ENCODE measurements at regions of chr12 and their contacts with region 1.

Region 1: GRCh38 chr12:109421355-109422087 is 55.6 kb downstream of the KCTD10 start:
- DNase-seq: no peak
- ATAC-seq: no peak
- H3K4me3 ChIP-seq: no peak overlapping the region
- H3K27ac ChIP-seq: no peak overlapping the region
- H3K4me1 ChIP-seq: no peaks in the 10 kb centered on the region
- CTCF ChIP-seq: no peak
- EP300 ChIP-seq: no peak
- POLR2A ChIP-seq: no peak
- RAD21 ChIP-seq: no peak

Region 2: DNA sequence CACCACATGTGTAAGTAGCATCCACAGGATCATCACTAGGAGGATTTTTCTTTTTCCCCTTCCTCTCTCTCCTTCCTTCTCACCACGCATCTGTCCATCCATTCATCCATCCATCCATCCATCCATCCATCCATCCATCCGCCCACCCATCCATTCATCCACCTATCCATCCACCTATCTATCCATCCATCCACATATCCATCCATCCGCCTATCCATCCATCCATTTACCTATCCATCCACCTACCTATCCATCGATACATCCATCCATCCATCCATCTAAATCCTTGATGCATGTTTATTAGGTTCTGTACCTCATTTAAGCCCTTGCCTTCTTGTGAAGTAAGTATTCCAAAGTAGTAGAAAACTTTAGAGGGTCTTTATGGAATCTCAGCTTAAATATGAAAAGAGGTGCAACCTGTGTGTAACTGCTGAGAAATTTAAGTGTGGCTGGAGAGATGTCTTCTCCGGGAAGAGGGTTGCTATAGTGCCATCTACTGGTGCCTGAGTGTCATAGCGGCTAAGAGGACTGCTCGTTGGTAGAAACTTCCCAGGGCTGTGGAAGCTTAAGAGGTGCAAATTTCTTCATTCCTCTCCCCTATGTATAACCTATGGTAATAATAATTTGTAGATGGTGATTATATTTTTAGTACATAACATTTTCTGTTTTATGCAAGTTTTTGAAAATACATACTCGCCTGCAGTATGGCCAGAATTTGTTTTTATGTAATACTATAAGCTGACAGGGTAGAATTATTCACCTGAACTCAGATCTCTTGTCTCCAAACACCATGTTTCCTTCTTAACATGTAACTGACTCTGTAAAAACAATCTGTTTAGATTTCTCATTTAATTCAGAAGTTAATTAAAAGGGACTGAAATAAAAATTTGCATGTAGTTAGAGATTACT is 27.8 kb before region 1 on chr12:
- CTCF ChIA-PET with region 1: interaction called, 10 read pairs
- POLR2A ChIA-PET with region 1: no interaction called
- DNase-seq: peak; percentile 76 to 80
- ATAC-seq: peak; percentile 87 to 88
- H3K4me3 ChIP-seq: no peak overlapping the region
- H3K27ac ChIP-seq: no peak overlapping the region
- H3K4me1 ChIP-seq: no peaks in the 10 kb centered on the region
- CTCF ChIP-seq: peak; percentile 84
- EP300 ChIP-seq: no peak
- POLR2A ChIP-seq: no peak
- RAD21 ChIP-seq: peak; percentile 53 to 74

Region 3: DNA sequence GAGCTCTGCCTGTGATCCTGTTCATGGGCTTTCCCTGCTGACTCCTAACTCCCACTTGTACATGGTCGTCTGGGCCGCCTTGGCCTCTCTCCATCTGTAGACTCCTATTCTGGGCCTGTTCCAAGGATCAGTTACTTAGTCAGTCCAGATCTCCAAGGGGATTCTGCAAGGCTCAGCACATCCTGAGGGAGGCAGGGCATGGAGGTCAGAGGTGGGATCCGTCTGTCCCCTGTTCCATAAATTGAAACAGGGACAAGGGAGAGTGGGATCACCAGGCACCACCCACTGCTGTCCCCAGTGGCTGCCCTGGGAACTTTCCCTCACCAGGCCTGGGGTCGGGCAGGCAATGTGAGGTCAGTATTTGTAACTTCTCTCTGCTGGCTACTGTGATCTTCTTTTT is 12.1 kb after region 1 on chr12:
- CTCF ChIA-PET with region 1: interaction called, 20 read pairs
- POLR2A ChIA-PET with region 1: no interaction called
- DNase-seq: peak in 1 of 2 experiments; percentile 43
- ATAC-seq: peak; percentile 68 to 88; a peak in 3 of 6 replicates
- H3K4me3 ChIP-seq: no peak overlapping the region
- H3K27ac ChIP-seq: no peak overlapping the region
- H3K4me1 ChIP-seq: 0 out of 3 replicates have a peak, but pooled peaks cover 3% of the 10 kb centered on the region
- CTCF ChIP-seq: no peak
- EP300 ChIP-seq: no peak
- POLR2A ChIP-seq: no peak
- RAD21 ChIP-seq: no peak

Region 4: DNA sequence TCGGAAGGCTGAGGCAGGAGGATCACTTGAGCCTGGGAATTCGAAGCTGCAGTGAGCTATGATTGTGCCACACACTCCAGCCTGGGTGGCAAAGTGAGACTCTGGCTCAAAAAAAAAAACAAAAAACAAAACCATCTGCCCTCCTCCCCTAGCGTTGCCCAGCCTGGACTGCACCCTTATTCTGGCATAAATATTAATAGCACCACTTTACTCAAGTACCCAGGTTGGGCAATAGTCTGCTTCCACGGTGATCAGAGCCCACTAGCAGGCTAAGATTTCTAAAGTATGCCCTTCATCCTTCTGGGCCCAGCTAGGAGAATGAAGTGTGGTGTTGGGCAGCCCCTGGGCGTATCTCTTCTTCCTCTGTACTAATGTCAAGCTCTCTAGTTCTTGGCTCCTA is 22.3 kb after region 1 on chr12:
- CTCF ChIA-PET with region 1: no interaction called
- POLR2A ChIA-PET with region 1: no interaction called
- DNase-seq: no peak
- ATAC-seq: peak; percentile 34 to 38; a peak in 3 of 6 replicates
- H3K4me3 ChIP-seq: no peak overlapping the region
- H3K27ac ChIP-seq: no peak overlapping the region
- H3K4me1 ChIP-seq: no peaks in the 10 kb centered on the region
- CTCF ChIP-seq: no peak
- EP300 ChIP-seq: no peak
- POLR2A ChIP-seq: no peak
- RAD21 ChIP-seq: no peak

Region 5: DNA sequence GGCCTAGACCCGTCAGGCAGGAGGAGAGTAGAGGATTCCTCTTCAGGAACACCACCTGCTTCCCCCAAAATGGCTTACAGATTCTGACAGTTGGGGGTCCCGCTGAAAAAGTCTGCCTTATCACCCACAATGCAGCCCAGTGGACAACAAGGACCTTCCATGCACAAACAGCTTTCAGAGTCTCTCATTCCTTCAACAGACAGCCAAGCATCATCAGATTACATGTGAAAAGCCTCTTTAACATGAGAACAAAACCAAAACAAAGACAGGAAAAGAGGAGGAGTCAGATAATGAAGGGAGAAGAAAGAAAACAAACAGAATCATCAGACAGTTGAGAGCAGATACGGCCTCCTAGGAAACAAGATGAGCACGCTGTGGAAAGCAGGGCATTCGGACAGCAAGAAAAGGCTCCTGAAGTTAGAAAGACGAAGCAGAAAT is 37.3 kb after region 1 on chr12:
- CTCF ChIA-PET with region 1: no interaction called
- POLR2A ChIA-PET with region 1: no interaction called
- DNase-seq: no peak
- ATAC-seq: no peak
- H3K4me3 ChIP-seq: no peak overlapping the region
- H3K27ac ChIP-seq: no peak overlapping the region
- H3K4me1 ChIP-seq: peaks cover 33% of the 10 kb centered on the region
- CTCF ChIP-seq: no peak
- EP300 ChIP-seq: no peak
- POLR2A ChIP-seq: no peak
- RAD21 ChIP-seq: no peak

Measured in A549 (cell line).